Dendritic cell treated with granulocyte-macrophage colony-stimulating factor and Interleukin-4, amounts not matched to agents 40 ng/mL and 50 ng/mL, for 4 days (primary cell): ENCODE measurements at regions of chr14 and their contacts with region 1.

Region 1: DNA sequence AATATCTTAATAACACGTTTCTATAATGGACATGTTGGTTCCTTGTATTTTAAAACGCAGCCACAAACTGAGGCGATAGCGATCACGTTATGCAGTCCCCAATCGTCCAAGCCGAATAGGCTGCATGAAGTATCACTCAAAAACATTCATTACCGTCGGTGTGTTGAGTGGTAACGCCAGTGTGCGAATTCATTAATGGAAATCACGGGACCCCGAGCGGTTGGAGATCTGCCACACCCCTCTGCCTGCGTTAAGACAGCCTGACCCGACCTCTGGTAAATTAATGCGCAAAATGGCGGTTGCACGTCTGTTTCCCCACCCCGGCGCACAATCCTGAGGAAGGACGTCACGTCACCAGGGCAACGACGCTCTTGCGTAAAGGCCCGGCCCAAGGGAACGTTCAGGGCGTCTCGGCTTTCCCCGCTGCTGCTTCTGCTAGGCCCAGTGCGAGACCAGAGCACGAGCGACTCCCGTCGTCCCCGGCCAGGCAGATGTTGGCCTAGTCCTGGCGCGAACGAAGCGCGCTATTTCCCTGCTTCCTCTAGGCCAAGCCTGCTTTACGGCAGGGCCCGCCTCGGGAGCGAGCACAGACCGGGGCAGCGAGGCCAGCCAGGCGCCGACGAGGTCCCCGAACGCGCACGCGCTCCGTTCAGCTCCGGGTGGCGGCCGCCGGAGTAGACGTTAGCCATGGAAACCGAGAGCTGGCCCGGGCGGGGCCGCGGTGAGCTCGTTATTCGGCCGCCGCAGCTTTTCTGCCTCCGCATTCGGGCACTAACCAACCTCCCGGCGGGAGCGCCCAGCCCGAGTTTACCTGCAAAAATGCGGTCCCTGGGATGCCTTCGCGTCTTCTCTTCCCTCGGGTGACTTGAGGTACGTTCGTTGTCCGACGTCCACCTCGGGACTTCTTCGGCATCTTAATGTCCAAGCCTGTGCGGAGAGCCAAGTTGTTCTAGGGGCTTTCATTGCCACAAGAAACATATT is at the start of gene PCNX4:
- H3K4me3 Mint-ChIP-seq: peak within 1 kb of the TSS; percentile 90
- H3K27ac Mint-ChIP-seq: peak within 1 kb of the TSS; percentile 86
- H3K4me1 Mint-ChIP-seq: peaks cover 32% of the 10 kb centered on the region
- H3K27me3 Mint-ChIP-seq: no peaks in the 10 kb centered on the region

Region 2: DNA sequence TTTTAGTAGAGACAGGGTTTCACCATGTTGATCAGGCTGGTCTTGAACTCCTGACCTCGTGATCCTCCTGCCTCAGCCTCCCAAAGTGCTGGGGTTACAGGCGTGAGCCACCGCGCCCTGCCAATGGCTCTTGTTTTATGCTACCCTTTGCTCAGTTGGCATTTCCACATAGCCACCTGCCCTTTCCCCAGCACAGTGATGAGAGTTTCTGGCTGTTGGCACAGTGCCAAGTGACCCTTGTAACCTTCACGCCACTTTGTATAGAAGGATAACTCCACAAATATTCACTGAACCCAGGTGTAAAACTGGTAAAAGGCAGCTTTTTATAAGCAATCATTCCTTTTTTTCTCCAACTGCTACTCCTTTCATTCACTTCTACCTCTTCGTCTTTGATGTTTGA is 496.8 kb before region 1 on chr14:
- intact Hi-C with region 1: loop called (anchors 10 kb)
- H3K4me3 Mint-ChIP-seq: no peak overlapping the region
- H3K27ac Mint-ChIP-seq: no peak overlapping the region
- H3K4me1 Mint-ChIP-seq: no peaks in the 10 kb centered on the region
- H3K27me3 Mint-ChIP-seq: no peaks in the 10 kb centered on the region

Region 3: GRCh38 chr14:60051721-60052221 is 40.1 kb before region 1 on chr14:
- intact Hi-C with region 1: no loop called
- H3K4me3 Mint-ChIP-seq: no peak overlapping the region
- H3K27ac Mint-ChIP-seq: no peak overlapping the region
- H3K4me1 Mint-ChIP-seq: peaks cover 4% of the 10 kb centered on the region
- H3K27me3 Mint-ChIP-seq: no peaks in the 10 kb centered on the region

Region 4: DNA sequence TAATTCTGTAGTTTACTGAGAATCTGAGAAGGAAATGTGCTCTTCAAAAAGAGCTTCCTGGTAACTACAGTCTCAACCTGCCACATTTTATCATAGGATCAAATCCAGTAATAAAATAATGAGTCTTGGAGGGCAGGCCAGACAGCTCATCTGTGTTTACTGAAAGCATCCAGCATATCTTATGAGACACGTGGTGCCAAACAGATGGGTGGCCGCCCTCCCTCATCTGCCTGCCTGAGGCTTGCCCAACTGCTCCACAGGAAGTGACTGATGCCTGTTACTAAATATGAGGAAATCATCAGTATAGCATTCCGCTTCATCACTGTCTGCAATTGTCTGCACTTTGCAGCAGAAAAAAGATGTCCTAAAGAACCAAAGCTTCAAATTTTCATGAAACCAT is 59.9 kb after region 1 on chr14:
- intact Hi-C with region 1: loop called (anchors 2 kb)
- H3K4me3 Mint-ChIP-seq: no peak overlapping the region
- H3K27ac Mint-ChIP-seq: peak overlapping the region; percentile 38
- H3K4me1 Mint-ChIP-seq: peaks cover 32% of the 10 kb centered on the region
- H3K27me3 Mint-ChIP-seq: no peaks in the 10 kb centered on the region

Region 5: DNA sequence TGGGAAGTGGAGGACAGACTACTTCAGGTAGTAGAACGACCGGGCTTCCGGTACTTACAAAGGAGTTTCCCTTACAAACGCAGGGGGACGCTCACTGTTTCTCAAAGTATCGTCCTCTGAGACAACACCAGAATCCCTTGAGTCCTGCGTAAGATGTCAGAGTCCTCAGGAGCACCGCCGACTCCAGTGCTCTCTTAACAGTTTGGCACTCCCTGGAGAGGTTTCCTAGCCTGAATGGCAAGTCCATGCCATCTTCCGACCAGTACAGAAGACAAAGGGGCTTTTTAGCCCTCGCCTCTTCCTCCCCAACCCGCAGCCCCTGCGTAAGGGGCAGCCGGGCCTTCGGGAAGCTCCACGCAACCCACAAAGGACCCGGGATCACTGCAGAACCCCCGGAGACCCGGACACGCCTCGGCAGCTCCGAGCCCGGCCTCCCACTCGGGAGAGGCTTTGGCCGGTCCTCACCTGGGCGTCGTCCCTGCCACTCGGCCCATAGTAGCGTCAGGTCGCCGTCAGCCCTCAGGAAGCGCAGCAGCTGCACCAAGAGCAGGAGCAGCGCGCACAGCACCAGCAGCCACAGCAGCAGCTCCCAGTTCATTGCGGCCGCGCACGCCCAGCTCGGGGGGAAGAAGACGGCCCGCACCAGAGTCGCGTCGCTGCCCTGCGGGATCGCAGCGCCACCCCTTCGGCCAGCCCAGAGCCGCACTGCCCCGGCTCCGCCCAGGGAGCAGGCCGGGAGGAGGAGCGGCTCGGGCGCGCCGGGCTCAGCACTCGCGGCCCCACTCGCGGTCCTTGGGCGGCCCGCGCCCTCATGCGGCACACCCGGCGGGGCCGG is 73.1 kb after region 1 on chr14 and contains the start of gene DHRS7:
- intact Hi-C with region 1: loop called (anchors 1 kb)
- H3K4me3 Mint-ChIP-seq: peak within 1 kb of the TSS; percentile 95
- H3K27ac Mint-ChIP-seq: peak within 1 kb of the TSS; percentile 95
- H3K4me1 Mint-ChIP-seq: peaks cover 13% of the 10 kb centered on the region
- H3K27me3 Mint-ChIP-seq: no peaks in the 10 kb centered on the region

Region 6: GRCh38 chr14:60248697-60249318 is 157.0 kb after region 1 on chr14 and contains the start of gene PPM1A:
- intact Hi-C with region 1: loop called (anchors 1 kb)
- H3K4me3 Mint-ChIP-seq: peak within 1 kb of the TSS; percentile 92
- H3K27ac Mint-ChIP-seq: peak within 1 kb of the TSS; percentile 99
- H3K4me1 Mint-ChIP-seq: peaks cover 48% of the 10 kb centered on the region
- H3K27me3 Mint-ChIP-seq: no peaks in the 10 kb centered on the region